ENCODE measurements at regions of chr7 and their contacts with region 1.

Region 1: GRCh38 chr7:69166979-69167516 is 431.2 kb upstream of the AUTS2 start:
- DNase-seq: no peak
- H3K4me3 Mint-ChIP-seq: no peak overlapping the region
- H3K27ac Mint-ChIP-seq: no peak overlapping the region
- H3K4me1 Mint-ChIP-seq: no peaks in the 10 kb centered on the region
- H3K27me3 Mint-ChIP-seq: no peaks in the 10 kb centered on the region

Region 2: GRCh38 chr7:69147631-69148030 is 19.4 kb before region 1 on chr7:
- CTCF ChIA-PET with region 1: no interaction called
- POLR2A ChIA-PET with region 1: interaction called, 10 read pairs
- DNase-seq: no peak
- H3K4me3 Mint-ChIP-seq: no peak overlapping the region
- H3K27ac Mint-ChIP-seq: no peak overlapping the region
- H3K4me1 Mint-ChIP-seq: no peaks in the 10 kb centered on the region
- H3K27me3 Mint-ChIP-seq: no peaks in the 10 kb centered on the region

Region 3: DNA sequence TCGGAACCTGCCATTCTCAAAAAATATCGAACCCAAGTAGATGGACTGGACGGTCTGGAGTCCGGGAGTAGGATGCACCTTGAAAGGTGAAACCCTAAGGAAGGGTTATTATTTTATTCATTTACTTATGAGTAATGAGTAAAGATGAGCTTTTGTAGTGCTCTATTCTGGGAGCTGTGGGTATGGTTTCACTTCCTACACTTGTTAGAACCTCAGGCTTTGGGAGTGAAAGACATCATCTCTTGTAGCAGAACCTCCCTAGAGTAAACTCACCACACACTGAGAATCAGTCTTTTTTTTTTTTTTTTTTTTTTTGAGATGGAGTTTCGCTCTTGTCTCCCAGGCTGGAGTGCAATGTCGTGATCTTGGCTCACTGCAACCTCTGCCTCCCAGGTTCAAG is 41.8 kb after region 1 on chr7:
- CTCF ChIA-PET with region 1: no interaction called
- POLR2A ChIA-PET with region 1: no interaction called
- DNase-seq: no peak
- H3K4me3 Mint-ChIP-seq: no peak overlapping the region
- H3K27ac Mint-ChIP-seq: no peak overlapping the region
- H3K4me1 Mint-ChIP-seq: no peaks in the 10 kb centered on the region
- H3K27me3 Mint-ChIP-seq: no peaks in the 10 kb centered on the region